ENCODE measurements at regions of chr2 and their contacts with region 1.

Region 1: DNA sequence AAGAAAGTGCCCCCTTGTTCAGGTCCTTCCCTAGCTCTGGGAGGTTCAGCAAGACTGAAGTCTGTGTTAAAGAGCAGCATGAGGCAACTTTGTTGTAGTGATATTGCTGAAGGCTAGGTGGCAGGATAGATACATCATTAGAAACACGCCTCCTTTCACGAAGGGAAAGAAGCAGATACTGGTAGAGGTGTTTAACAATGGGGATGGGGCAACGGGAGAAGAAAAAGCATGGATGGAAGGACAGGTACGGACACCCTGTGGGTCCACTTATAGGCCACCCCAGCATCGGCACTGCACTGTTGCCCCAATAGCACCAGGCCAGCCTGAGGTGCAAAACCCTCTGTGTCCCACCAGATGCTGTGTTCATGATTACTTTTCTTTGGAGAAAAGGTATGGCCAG is 3.5 kb upstream of the IGFBP5 start:
- DNase-seq: no peak
- H3K4me3 Mint-ChIP-seq: no peak overlapping the region
- H3K27ac Mint-ChIP-seq: no peak overlapping the region
- H3K4me1 Mint-ChIP-seq: peaks cover 10% of the 10 kb centered on the region
- H3K27me3 Mint-ChIP-seq: no peaks in the 10 kb centered on the region

Region 2: DNA sequence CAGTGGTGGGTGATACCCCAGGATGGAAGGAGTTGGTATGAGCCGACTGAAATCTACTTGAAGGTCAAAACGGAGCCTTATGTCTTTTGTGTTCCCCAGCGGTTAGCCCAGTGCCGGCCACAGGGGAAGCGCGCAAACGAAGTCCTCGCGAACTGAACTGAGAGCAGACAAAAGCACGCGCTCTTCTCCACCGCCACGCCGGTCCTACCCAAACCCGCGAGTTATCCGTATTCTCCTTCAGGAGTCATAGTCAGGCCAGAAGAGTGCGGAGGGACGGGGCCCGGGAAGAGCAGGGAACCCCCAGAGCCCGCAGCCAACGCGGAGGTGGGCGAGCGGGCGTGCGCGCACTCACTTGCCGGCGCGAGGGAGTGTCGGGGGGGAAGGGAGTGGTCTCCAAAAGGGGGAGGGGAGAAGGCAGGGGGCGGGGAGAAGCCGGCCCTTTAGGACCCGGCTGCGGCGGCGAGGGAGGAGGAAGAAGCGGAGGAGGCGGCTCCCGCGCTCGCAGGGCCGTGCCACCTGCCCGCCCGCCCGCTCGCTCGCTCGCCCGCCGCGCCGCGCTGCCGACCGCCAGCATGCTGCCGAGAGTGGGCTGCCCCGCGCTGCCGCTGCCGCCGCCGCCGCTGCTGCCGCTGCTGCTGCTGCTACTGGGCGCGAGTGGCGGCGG is 65.8 kb before region 1 on chr2 and contains the start of gene IGFBP2:
- CTCF ChIA-PET with region 1: no interaction called
- DNase-seq: peak; percentile 58
- H3K4me3 Mint-ChIP-seq: peak within 1 kb of the TSS; percentile 79
- H3K27ac Mint-ChIP-seq: peak within 1 kb of the TSS; percentile 16
- H3K4me1 Mint-ChIP-seq: peaks cover 32% of the 10 kb centered on the region
- H3K27me3 Mint-ChIP-seq: peaks cover 90% of the 10 kb centered on the region

Region 3: DNA sequence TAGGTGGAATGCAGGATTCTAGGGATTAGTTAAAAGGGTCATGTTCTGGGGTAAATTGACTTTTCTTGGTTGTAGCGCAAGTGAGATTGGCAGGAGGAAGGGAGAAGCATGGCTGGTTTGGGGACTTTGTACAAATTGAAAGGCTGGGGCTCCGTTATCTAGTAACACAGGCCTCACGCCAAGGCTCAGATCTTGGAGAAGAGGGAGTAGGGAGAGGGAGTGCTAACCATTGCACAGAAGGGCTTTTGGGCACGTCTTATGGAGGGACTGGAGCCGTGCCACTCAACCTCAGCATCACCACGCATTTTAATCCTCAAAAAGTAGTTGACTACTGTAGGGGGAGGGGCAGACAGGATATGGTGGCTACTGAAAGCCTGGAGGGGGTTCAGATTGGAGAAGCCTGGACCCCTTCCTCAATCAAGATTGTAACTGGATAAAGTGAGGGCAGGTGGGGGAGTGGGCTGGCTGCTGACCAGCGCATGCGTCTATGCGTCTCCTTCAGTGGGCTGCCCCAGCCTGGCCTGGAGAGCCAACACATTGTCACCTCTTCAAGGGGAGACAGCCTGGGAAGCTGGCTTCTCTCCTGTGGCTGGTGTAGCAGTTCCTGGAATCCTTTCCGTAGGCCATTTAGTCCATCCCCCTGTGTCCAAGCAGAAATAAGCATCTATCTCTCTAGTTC is 17.8 kb before region 1 on chr2:
- CTCF ChIA-PET with region 1: interaction called, 10 read pairs
- DNase-seq: no peak
- H3K4me3 Mint-ChIP-seq: no peak overlapping the region
- H3K27ac Mint-ChIP-seq: no peak overlapping the region
- H3K4me1 Mint-ChIP-seq: peaks cover 3% of the 10 kb centered on the region
- H3K27me3 Mint-ChIP-seq: peaks cover 52% of the 10 kb centered on the region

Region 4: DNA sequence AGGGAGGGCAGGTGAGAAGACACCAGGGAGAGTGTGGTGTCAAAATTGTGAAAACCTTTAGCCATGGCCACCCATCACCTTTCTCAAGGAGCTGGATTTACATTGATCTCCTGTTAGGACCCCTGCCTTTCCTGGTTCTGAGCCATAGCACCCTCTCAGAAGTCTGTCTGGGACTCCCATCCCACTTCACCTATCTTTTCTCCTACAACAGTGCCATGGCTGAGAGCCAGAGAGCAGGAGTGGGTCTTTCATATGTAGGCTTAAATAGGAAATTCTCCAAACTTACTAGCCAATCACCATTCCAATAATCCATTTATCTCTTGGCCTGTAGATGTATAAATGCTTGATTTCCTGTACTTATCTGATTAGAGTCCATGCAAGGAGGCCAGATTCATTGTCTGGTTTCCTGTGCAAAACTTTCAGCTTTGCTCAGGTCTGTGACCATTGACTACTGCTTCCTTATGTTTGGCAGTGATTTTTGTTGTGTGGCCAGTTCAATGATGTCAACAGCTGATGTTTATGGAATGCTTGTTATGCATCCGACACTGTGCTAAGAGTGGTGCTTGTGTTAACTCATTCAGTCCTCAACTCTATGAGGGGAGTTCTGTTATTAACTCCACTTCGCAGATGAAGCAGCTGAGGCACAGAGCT is 54.1 kb after region 1 on chr2:
- CTCF ChIA-PET with region 1: no interaction called
- DNase-seq: no peak
- H3K4me3 Mint-ChIP-seq: no peak overlapping the region
- H3K27ac Mint-ChIP-seq: no peak overlapping the region
- H3K4me1 Mint-ChIP-seq: no peaks in the 10 kb centered on the region
- H3K27me3 Mint-ChIP-seq: peaks cover 29% of the 10 kb centered on the region

Region 5: DNA sequence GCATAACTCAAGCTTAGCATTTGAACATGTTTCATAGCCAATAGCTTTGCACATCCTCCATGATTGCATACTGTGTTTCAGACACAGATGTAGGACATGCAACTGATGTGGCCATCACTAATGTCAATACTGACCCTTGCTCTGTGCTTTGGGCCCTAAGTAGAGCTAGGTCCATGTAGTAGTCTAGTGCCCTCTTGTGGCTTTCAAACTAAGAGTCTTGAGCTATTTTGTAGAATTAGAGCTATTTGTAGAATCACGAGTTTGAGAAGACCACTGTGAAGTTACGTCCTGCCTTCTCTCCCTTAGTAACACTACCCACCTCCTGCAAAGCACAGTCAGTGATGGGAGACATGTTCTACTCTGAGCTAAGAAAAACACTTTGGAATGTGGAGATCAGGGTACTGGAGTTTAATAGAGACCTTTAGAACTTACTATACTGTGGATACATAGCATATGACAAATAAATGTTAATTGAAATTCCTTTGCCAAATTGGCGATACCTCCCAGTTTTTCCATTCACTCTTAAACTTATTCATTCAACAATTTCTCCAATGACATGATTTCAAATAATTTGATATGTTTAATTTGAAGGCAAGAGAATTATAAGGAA is 467.5 kb after region 1 on chr2:
- CTCF ChIA-PET with region 1: interaction called, 12 read pairs
- DNase-seq: no peak
- H3K4me3 Mint-ChIP-seq: no peak overlapping the region
- H3K27ac Mint-ChIP-seq: no peak overlapping the region
- H3K4me1 Mint-ChIP-seq: peaks cover 22% of the 10 kb centered on the region
- H3K27me3 Mint-ChIP-seq: peaks cover 17% of the 10 kb centered on the region

Region 6: GRCh38 chr2:217510771-217511291 is 811.9 kb after region 1 on chr2:
- CTCF ChIA-PET with region 1: interaction called, 18 read pairs
- DNase-seq: peak; percentile 60
- H3K4me3 Mint-ChIP-seq: no peak overlapping the region
- H3K27ac Mint-ChIP-seq: no peak overlapping the region
- H3K4me1 Mint-ChIP-seq: no peaks in the 10 kb centered on the region
- H3K27me3 Mint-ChIP-seq: peaks cover 4% of the 10 kb centered on the region

Measured in activated naive CD4-positive, alpha-beta T cell treated with anti-CD3 and anti-CD28 coated beads, Interleukin-2, amount 10 ng/mL, durations not matched to agents 7 days and 5 days (primary cell).